ENCODE measurements at regions of chr7 and their contacts with region 1.

Region 1: GRCh38 chr7:135645296-135645904 is 16.9 kb upstream of the STMP1 start:
- DNase-seq: no peak
- ATAC-seq: peak; percentile 74
- H3K4me3 Mint-ChIP-seq: no peak overlapping the region
- H3K27ac Mint-ChIP-seq: no peak overlapping the region
- H3K4me1 Mint-ChIP-seq: no peaks in the 10 kb centered on the region
- H3K27me3 Mint-ChIP-seq: no peaks in the 10 kb centered on the region
- CTCF ChIP-seq: peak; percentile 46; the same call in 1 of the 2 replicates

Region 2: GRCh38 chr7:135620980-135621850 is 24.2 kb before region 1 on chr7:
- CTCF ChIA-PET with region 1: interaction called, 11 read pairs
- POLR2A ChIA-PET with region 1: no interaction called
- DNase-seq: peak; percentile 15
- ATAC-seq: peak; percentile 61
- H3K4me3 Mint-ChIP-seq: no peak overlapping the region
- H3K27ac Mint-ChIP-seq: no peak overlapping the region
- H3K4me1 Mint-ChIP-seq: no peaks in the 10 kb centered on the region
- H3K27me3 Mint-ChIP-seq: no peaks in the 10 kb centered on the region
- CTCF ChIP-seq: peak; percentile 59

Region 3: GRCh38 chr7:135662373-135663114 is 17.1 kb after region 1 on chr7 and contains the start of gene STMP1:
- CTCF ChIA-PET with region 1: interaction called, 10 read pairs
- POLR2A ChIA-PET with region 1: no interaction called
- DNase-seq: peak; percentile 98
- ATAC-seq: peak; percentile 94
- H3K4me3 Mint-ChIP-seq: peak within 1 kb of the TSS; percentile 99
- H3K27ac Mint-ChIP-seq: peak within 1 kb of the TSS; percentile 99
- H3K4me1 Mint-ChIP-seq: peaks cover 17% of the 10 kb centered on the region
- H3K27me3 Mint-ChIP-seq: no peaks in the 10 kb centered on the region
- CTCF ChIP-seq: peak; percentile 54
- total RNA-seq, gene STMP1: 26.1 to 31.6 TPM (median 30.4 TPM) in 3 replicates

Region 4: DNA sequence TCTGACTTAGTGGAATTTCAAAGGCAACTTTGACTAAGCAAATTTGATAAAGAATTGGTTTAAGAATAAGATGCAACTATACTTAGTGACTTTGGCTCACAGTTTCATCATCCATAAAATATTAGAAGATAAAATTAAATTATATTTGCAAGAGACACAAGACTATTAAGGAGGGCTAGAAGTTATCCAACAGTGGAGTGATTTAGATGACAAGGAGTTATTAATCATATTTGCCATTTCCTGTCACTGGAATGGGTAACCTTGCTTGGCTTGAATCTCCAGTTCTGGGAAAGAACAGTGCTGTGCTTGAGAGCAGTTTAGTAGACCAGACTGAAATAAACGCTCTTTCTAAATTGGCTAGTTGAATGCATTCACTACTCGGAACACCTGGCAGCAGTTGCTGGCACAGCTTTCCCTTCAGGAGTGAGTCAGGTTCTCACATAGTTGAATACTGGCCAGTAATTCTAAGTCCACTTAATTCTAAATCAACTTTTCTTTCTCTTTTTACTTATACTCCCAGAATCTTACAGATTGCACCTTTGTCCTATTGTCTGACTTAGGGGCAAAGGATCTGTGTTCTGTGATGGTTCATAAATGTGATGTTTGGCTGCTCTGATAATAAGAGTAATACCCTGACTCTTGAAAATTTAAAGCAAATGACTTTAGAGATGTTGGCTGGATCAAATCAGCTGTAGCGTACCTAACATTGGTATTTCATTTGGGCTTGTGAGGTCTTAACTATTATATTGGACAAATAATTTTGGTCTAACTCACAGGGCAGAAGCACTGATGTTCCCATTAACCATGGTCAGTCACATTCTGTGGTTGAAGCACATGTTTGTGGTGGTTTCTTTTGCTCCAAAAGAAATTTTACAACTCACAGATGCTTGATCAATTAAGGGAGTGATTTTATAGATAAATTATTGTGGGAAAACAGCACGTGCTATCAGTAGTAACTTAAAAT is 33.5 kb after region 1 on chr7:
- CTCF ChIA-PET with region 1: no interaction called
- POLR2A ChIA-PET with region 1: no interaction called
- DNase-seq: no peak
- ATAC-seq: no peak
- H3K4me3 Mint-ChIP-seq: no peak overlapping the region
- H3K27ac Mint-ChIP-seq: no peak overlapping the region
- H3K4me1 Mint-ChIP-seq: peaks cover 6% of the 10 kb centered on the region
- H3K27me3 Mint-ChIP-seq: no peaks in the 10 kb centered on the region
- CTCF ChIP-seq: no peak

Measured in WTC11 (cell line).